ENCODE measurements at regions of chr5 and their contacts with region 1.

Region 1: DNA sequence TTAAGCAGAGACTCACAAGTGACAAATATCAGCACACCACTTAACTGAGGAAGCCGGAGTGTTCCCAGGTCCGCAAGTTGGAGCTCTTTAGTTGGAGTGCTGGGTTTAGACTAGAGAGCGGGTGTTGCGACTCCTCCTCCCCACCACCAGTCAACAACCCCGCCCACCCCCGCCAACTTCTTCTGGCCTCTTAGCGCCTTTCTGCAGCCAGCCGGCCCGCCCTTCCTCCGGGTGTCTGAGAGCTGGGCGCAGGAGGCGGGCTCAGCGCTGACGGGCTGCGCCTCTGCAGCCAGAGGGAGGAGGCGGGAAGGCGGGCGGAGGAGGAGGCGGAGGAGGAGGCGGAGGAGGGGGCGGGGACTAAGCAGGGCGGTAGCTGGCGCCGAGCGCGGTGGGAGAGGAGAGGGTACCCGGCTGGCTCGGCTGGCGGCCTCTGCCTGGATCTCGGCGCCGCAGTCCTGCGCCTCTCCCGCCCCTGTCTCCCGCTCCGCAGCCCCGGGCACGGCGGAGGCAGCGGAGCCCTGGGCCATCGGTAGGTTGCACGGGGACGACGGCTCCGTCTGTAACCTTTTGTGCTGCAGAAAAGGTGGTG is at the start of gene MACIR:
- DNase-seq: peak; percentile 96
- H3K4me3 ChIP-seq: peak within 1 kb of the TSS; percentile 81
- H3K27ac ChIP-seq: peak within 1 kb of the TSS; percentile 62
- H3K4me1 ChIP-seq: peaks cover 18% of the 10 kb centered on the region
- CTCF ChIP-seq: 0 out of 2 replicates have a peak, but pooled peaks have one; percentile 11
- total RNA-seq, gene MACIR: 10.9 and 13.8 TPM in 2 replicates

Region 2: GRCh38 chr5:103119765-103120606 is 138.5 kb before region 1 on chr5 and contains the starts of genes GIN1 and PPIP5K2:
- CTCF ChIA-PET with region 1: no interaction called
- POLR2A ChIA-PET with region 1: interaction called, 6 read pairs
- intact Hi-C with region 1: loop called (anchors 1 kb)
- DNase-seq: peak; percentile 98
- H3K4me3 ChIP-seq: peak within 1 kb of the TSS; percentile 90
- H3K27ac ChIP-seq: peak within 1 kb of the TSS; percentile 99
- H3K4me1 ChIP-seq: peaks cover 29% of the 10 kb centered on the region
- CTCF ChIP-seq: no peak
- total RNA-seq, gene GIN1: 3.9 TPM in 2 replicates
- total RNA-seq, gene PPIP5K2: 45.5 and 50.3 TPM in 2 replicates

Region 3: DNA sequence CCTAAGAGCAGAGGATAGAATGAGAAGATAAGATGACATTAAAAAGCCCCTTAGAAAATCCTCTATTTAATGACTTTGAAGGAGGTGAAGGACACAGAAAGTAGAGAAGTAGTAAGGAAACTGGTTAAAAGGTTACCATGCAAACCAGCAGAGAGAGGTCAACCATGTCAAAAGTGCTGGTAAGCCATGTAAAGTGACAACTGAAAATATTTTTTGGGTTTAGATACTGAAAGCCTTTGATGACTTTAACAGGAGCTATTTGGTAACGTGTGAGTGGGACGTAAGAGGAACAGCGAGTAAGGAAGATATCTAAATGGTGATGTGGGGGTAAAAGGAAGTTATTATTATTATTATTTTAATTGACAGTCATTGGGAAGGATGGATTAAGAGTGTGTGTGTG is 57.0 kb after region 1 on chr5:
- CTCF ChIA-PET with region 1: no interaction called
- POLR2A ChIA-PET with region 1: no interaction called
- intact Hi-C with region 1: no loop called
- DNase-seq: no peak
- H3K4me3 ChIP-seq: no peak overlapping the region
- H3K27ac ChIP-seq: no peak overlapping the region
- H3K4me1 ChIP-seq: no peaks in the 10 kb centered on the region
- CTCF ChIP-seq: no peak